ENCODE measurements at regions of chr16 and their contacts with region 1.

Region 1: GRCh38 chr16:82626791-82627261 is at the start of gene CDH13:
- DNase-seq: peak; percentile 61
- H3K4me3 Mint-ChIP-seq: peak within 1 kb of the TSS; percentile 82
- H3K27ac Mint-ChIP-seq: peak within 1 kb of the TSS; percentile 96
- H3K4me1 Mint-ChIP-seq: peaks cover 36% of the 10 kb centered on the region
- H3K27me3 Mint-ChIP-seq: no peaks in the 10 kb centered on the region
- CTCF ChIP-seq: no peak
- total RNA-seq, gene CDH13: 49.3 and 55.2 TPM in 2 replicates

Region 2: DNA sequence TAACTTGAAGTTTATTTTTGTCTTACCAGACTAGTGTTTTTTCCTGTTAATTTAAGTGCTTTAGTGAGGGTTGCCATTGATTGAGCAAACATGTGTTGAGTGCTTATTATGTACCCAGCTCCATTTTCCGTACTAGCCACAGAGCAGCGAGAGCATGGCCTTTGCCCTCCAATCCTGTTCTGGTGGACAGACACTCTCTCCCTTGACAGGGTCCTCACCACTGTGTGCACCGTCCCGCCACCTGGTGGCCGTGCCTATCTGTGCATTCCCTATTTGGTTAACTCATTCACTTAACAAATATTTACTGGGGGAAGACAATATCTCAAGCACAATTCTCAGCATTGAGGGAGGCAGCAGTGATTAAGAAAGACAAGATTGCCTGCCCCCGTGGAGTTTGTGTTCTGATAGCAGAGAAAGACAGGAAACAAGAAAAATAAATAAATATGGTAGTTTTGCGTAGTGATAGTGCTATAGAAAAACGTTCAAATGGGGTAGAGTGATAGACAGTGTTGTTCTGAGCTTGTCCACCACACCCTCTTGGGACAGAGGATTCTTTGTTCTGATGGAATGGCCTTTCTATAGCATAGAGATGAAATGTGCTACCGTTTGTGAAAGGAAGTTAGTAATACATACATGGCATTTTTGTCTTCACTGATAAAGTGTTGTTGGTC is 13.0 kb after region 1 on chr16:
- CTCF ChIA-PET with region 1: interaction called, 46 read pairs
- POLR2A ChIA-PET with region 1: interaction called, 5 read pairs
- intact Hi-C with region 1: loop called (anchors 1 kb)
- DNase-seq: peak; percentile 73
- H3K4me3 Mint-ChIP-seq: no peak overlapping the region
- H3K27ac Mint-ChIP-seq: no peak overlapping the region
- H3K4me1 Mint-ChIP-seq: peaks cover 36% of the 10 kb centered on the region
- H3K27me3 Mint-ChIP-seq: no peaks in the 10 kb centered on the region
- CTCF ChIP-seq: peak; percentile 82

Region 3: DNA sequence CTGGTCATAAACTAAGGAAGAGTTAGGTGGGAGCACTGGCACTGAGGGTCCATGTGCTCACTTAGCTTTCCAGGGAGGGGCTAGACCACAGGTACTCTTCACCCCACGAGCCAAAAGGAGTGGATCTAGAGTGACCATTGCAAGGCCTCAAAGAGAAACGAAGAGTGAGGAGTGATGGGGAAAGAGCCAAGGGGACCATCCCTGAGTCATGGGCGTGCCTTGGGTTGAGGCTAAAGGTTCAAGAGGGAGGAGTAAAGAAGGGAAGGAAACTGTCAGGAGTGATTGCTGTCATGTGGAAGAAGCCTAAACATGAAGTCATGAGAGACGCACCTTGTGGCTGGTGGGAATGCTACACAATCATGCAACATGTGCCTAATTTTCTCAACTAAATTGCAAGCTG is 141.0 kb after region 1 on chr16:
- CTCF ChIA-PET with region 1: no interaction called
- POLR2A ChIA-PET with region 1: no interaction called
- intact Hi-C with region 1: no loop called
- DNase-seq: no peak
- H3K4me3 Mint-ChIP-seq: no peak overlapping the region
- H3K27ac Mint-ChIP-seq: no peak overlapping the region
- H3K4me1 Mint-ChIP-seq: no peaks in the 10 kb centered on the region
- H3K27me3 Mint-ChIP-seq: no peaks in the 10 kb centered on the region
- CTCF ChIP-seq: no peak

Region 4: GRCh38 chr16:82936941-82937551 is 310.2 kb after region 1 on chr16:
- CTCF ChIA-PET with region 1: no interaction called
- POLR2A ChIA-PET with region 1: no interaction called
- intact Hi-C with region 1: loop called (anchors 5 kb)
- DNase-seq: peak; percentile 66
- H3K4me3 Mint-ChIP-seq: peak overlapping the region; percentile 28
- H3K27ac Mint-ChIP-seq: peak overlapping the region; percentile 80
- H3K4me1 Mint-ChIP-seq: peaks cover 15% of the 10 kb centered on the region
- H3K27me3 Mint-ChIP-seq: no peaks in the 10 kb centered on the region
- CTCF ChIP-seq: no peak

Region 5: GRCh38 chr16:83215406-83216001 is 588.7 kb after region 1 on chr16:
- CTCF ChIA-PET with region 1: interaction called, 20 read pairs
- POLR2A ChIA-PET with region 1: no interaction called
- intact Hi-C with region 1: loop called (anchors 2 kb)
- DNase-seq: peak; percentile 59
- H3K4me3 Mint-ChIP-seq: no peak overlapping the region
- H3K27ac Mint-ChIP-seq: no peak overlapping the region
- H3K4me1 Mint-ChIP-seq: no peaks in the 10 kb centered on the region
- H3K27me3 Mint-ChIP-seq: no peaks in the 10 kb centered on the region
- CTCF ChIP-seq: peak; percentile 87

Region 6: DNA sequence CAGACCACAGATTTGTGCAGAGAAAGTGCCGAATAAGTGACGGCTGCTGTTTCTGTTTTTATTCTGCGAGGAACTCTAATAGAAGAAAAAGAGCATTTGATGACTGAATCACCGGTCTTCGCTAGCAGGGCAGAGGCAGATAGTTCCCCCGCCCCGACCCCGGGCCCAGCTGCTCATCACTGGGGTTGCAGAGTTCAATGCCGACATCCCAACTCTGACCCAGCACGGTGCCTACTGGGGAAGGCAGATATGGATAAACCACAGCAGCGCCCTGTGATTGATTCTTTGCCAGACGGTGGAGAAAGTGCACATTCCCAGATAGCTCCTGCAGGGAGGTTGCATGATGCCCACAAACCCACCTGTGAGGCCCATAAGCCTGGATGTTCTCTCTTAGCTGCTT is 823.0 kb after region 1 on chr16:
- CTCF ChIA-PET with region 1: interaction called, 3 read pairs
- POLR2A ChIA-PET with region 1: no interaction called
- intact Hi-C with region 1: loop called (anchors 5 kb)
- DNase-seq: no peak
- H3K4me3 Mint-ChIP-seq: no peak overlapping the region
- H3K27ac Mint-ChIP-seq: no peak overlapping the region
- H3K4me1 Mint-ChIP-seq: peaks cover 13% of the 10 kb centered on the region
- H3K27me3 Mint-ChIP-seq: no peaks in the 10 kb centered on the region
- CTCF ChIP-seq: no peak

Measured in MCF 10A (cell line).